ENCODE measurements at regions of chr22 and their contacts with region 1.

Region 1: DNA sequence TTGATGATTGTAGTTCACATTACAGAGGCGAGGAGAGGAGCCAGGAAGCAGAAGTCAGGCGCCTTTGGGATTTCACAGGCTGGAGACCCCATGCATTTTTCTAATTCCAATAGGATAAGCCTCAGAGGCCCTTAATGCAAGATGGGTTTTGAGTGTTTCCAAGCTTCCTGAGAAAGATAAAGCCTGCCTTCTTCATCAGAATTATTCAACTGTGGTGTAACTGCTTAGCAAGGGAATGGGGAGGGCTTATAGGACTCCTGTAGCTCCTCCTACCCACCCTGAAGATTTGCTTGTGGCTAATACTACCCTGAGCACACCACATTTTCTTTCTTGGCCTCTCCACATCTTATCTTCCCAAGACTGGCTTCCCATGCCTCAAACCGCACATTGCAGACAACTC is 151.1 kb upstream of the ISX start:
- DNase-seq: no peak
- H3K4me3 ChIP-seq: no peak overlapping the region
- H3K27ac ChIP-seq: no peak overlapping the region
- H3K4me1 ChIP-seq: peaks cover 0 to 3% (median 0%) of the 10 kb centered on the region in 4 donors
- H3K27me3 ChIP-seq: no peaks in the 10 kb centered on the region
- CTCF ChIP-seq: no peak

Region 2: GRCh38 chr22:34866495-34867131 is 48.2 kb before region 1 on chr22:
- intact Hi-C with region 1: loop called (anchors 5 kb)
- DNase-seq: no peak
- H3K4me3 ChIP-seq: no peak overlapping the region
- H3K27ac ChIP-seq: no peak overlapping the region
- H3K4me1 ChIP-seq: peaks cover 0 to 6% (median 0%) of the 10 kb centered on the region in 4 donors
- H3K27me3 ChIP-seq: no peaks in the 10 kb centered on the region
- CTCF ChIP-seq: no peak